ENCODE measurements at regions of chr15 and their contacts with region 1.

Region 1: GRCh38 chr15:43285609-43286037 is 18.9 kb upstream of the TGM5 start:
- DNase-seq: peak; percentile 75
- H3K4me3 Mint-ChIP-seq: no peak overlapping the region
- H3K27ac Mint-ChIP-seq: no peak overlapping the region
- H3K4me1 Mint-ChIP-seq: no peaks in the 10 kb centered on the region
- H3K27me3 Mint-ChIP-seq: peaks cover under 1% of the 10 kb centered on the region

Region 2: GRCh38 chr15:42704492-42704926 is 581.1 kb before region 1 on chr15:
- CTCF ChIA-PET with region 1: no interaction called
- intact Hi-C with region 1: loop called (anchors 1 kb)
- DNase-seq: peak; percentile 81
- H3K4me3 Mint-ChIP-seq: no peak overlapping the region
- H3K27ac Mint-ChIP-seq: no peak overlapping the region
- H3K4me1 Mint-ChIP-seq: peaks cover 6% of the 10 kb centered on the region
- H3K27me3 Mint-ChIP-seq: no peaks in the 10 kb centered on the region

Region 3: GRCh38 chr15:43185157-43186017 is 100.2 kb before region 1 on chr15 and contains the start of gene CCNDBP1:
- CTCF ChIA-PET with region 1: interaction called, 9 read pairs
- intact Hi-C with region 1: loop called (anchors 1 kb)
- DNase-seq: peak; percentile 94
- H3K4me3 Mint-ChIP-seq: peak within 1 kb of the TSS; percentile 93
- H3K27ac Mint-ChIP-seq: peak within 1 kb of the TSS; percentile 91
- H3K4me1 Mint-ChIP-seq: peaks cover 15% of the 10 kb centered on the region
- H3K27me3 Mint-ChIP-seq: no peaks in the 10 kb centered on the region
- total RNA-seq, gene CCNDBP1: 54.6 to 62.1 TPM

Region 4: GRCh38 chr15:43204016-43204901 is 81.4 kb before region 1 on chr15:
- CTCF ChIA-PET with region 1: interaction called, 24 read pairs
- intact Hi-C with region 1: no loop called
- DNase-seq: peak; percentile 75
- H3K4me3 Mint-ChIP-seq: no peak overlapping the region
- H3K27ac Mint-ChIP-seq: no peak overlapping the region
- H3K4me1 Mint-ChIP-seq: peaks cover 5% of the 10 kb centered on the region
- H3K27me3 Mint-ChIP-seq: peaks cover 5% of the 10 kb centered on the region

Region 5: GRCh38 chr15:43230640-43231115 is 54.9 kb before region 1 on chr15:
- CTCF ChIA-PET with region 1: interaction called, 167 read pairs
- intact Hi-C with region 1: loop called (anchors 1 kb)
- DNase-seq: no peak
- H3K4me3 Mint-ChIP-seq: no peak overlapping the region
- H3K27ac Mint-ChIP-seq: no peak overlapping the region
- H3K4me1 Mint-ChIP-seq: peaks cover 5% of the 10 kb centered on the region
- H3K27me3 Mint-ChIP-seq: peaks cover 4% of the 10 kb centered on the region

Region 6: GRCh38 chr15:43268111-43269105 is 17.2 kb before region 1 on chr15:
- CTCF ChIA-PET with region 1: interaction called, 10 read pairs
- intact Hi-C with region 1: no loop called
- DNase-seq: peak; percentile 47
- H3K4me3 Mint-ChIP-seq: no peak overlapping the region
- H3K27ac Mint-ChIP-seq: no peak overlapping the region
- H3K4me1 Mint-ChIP-seq: peaks cover 1% of the 10 kb centered on the region
- H3K27me3 Mint-ChIP-seq: peaks cover 3% of the 10 kb centered on the region

Measured in activated naive CD4-positive, alpha-beta T cell treated with anti-CD3 and anti-CD28 coated beads for 36 hours (primary cell).